Mammary epithelial cell (primary cell): ENCODE measurements at regions of chr21 and their contacts with region 1.

Region 1: GRCh38 chr21:14382835-14383594 is at the start of gene HSPA13:
- DNase-seq: peak; percentile 100
- H3K4me3 ChIP-seq: peak within 1 kb of the TSS; percentile 81 to 92 (median 86)
- H3K27ac ChIP-seq: peak within 1 kb of the TSS; percentile 80
- H3K4me1 ChIP-seq: peaks cover 18% of the 10 kb centered on the region
- H3K27me3 ChIP-seq: no peaks in the 10 kb centered on the region
- CTCF ChIP-seq: no peak
- total RNA-seq, gene HSPA13: 48.3 to 76.7 TPM

Region 2: DNA sequence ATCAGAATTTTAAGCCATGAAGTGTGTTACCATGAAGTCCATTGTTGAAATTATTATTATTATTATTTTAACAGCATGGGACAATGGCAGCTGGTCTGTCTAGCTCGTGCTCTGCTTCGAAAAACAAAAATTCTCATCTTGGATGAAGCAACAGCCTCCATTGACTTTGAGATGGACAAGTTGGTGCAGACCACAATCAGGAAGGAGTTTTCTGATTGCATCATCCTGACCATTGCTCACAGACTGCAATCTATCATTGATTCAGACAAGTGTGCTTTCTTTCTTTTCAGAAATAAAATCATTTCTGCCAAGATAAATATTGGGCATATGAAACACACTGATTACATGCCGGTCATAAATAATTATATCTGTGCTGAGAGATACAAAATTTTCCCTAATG is 21.1 kb before region 1 on chr21:
- CTCF ChIA-PET with region 1: no interaction called
- dilution Hi-C with region 1: no loop called
- in situ Hi-C with region 1: no loop called
- intact Hi-C with region 1: loop called (anchors 2 kb)
- DNase-seq: peak; percentile 89
- H3K4me3 ChIP-seq: no peak overlapping the region
- H3K27ac ChIP-seq: no peak overlapping the region
- H3K4me1 ChIP-seq: peaks cover 18% of the 10 kb centered on the region
- H3K27me3 ChIP-seq: no peaks in the 10 kb centered on the region
- CTCF ChIP-seq: no peak

Region 3: DNA sequence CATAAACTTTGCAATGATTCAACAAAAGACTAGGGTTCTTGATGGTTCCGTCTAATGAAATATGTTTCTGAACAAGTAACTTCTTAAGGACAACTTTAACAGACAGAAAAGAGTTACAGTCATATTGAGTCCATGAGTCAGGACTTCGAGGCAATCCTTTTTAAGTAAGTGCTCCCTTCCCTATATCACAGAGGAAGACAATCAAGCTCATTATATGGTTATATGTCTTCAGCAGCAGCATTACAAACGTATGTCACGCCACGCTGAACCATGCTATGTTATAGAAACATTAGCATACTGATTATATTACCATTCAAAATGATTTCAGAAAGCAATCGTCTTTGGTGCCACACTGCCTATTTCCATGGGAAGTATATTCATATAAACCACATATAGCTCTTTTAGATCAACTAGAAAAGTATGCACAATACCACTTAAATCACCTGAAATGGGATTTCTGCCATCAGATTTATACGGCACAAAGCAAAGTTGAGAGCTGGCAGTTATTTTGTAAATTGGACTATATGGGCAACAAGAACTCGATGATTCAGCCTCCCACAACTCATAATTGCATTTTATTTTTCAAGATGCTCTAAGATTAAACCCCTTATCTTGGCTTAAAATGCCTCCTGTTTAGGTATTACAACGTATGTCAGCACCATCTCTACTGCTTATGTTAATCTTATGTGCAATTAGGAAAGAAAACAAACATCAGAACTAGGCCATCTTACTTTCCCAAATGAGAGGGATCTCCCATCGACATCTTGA is 274.4 kb after region 1 on chr21:
- CTCF ChIA-PET with region 1: no interaction called
- dilution Hi-C with region 1: no loop called
- in situ Hi-C with region 1: no loop called
- intact Hi-C with region 1: no loop called
- DNase-seq: no peak
- H3K4me3 ChIP-seq: no peak overlapping the region
- H3K27ac ChIP-seq: no peak overlapping the region
- H3K4me1 ChIP-seq: no peaks in the 10 kb centered on the region
- H3K27me3 ChIP-seq: no peaks in the 10 kb centered on the region
- CTCF ChIP-seq: no peak

Region 4: DNA sequence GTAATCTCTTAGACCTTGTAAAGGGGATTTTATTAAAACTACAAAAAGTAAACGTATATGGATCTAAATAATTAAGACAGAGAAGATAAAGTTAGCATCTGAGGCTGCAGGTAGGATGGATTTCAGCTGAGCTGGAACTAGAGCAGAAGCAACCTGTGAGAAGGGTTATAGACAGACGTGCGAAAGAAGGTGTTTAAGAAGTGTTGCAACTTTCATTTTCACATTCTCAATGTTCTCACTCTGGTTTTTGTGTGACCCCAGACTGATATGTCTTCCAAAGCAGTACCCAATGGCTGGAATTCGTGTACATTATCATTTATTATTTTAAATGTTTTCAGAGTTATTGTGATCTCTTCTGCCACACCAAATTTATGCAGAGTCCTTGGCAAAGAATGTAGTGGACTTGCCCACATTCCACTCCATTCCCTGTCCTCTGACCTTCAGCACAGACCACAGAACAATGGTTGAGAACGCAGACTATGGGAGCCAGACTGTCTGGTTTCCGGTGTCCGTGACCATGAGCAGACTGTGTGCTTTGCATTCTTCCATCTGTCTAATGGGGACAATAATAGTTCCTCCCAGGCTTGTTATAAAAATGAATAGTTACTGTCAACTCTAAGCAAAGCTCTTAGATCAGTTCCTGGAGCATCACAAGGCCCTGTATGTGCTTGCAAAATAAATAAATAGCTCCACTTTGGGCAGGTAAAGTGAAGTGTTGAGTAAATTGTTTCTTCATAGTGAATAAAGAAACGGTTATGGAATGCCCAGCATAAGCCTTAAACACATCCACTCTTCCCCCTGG is 303.7 kb after region 1 on chr21:
- CTCF ChIA-PET with region 1: no interaction called
- dilution Hi-C with region 1: no loop called
- in situ Hi-C with region 1: no loop called
- intact Hi-C with region 1: no loop called
- DNase-seq: no peak
- H3K4me3 ChIP-seq: no peak overlapping the region
- H3K27ac ChIP-seq: no peak overlapping the region
- H3K4me1 ChIP-seq: no peaks in the 10 kb centered on the region
- H3K27me3 ChIP-seq: no peaks in the 10 kb centered on the region
- CTCF ChIP-seq: no peak

Region 5: GRCh38 chr21:15841856-15842564 is 1459.0 kb after region 1 on chr21:
- CTCF ChIA-PET with region 1: no interaction called
- dilution Hi-C with region 1: no loop called
- in situ Hi-C with region 1: no loop called
- intact Hi-C with region 1: loop called (anchors 5 kb)
- DNase-seq: peak; percentile 61
- H3K4me3 ChIP-seq: no peak overlapping the region
- H3K27ac ChIP-seq: peak overlapping the region; percentile 6
- H3K4me1 ChIP-seq: peaks cover 26% of the 10 kb centered on the region
- H3K27me3 ChIP-seq: no peaks in the 10 kb centered on the region
- CTCF ChIP-seq: no peak